MCF 10A (cell line): ENCODE measurements at regions of chr11 and their contacts with region 1.

Region 1: GRCh38 chr11:8786933-8787332 is 104.3 kb downstream of the RPL27A start:
- DNase-seq: peak; percentile 17
- H3K4me3 Mint-ChIP-seq: no peak overlapping the region
- H3K27ac Mint-ChIP-seq: peak overlapping the region; percentile 26
- H3K4me1 Mint-ChIP-seq: peaks cover 33% of the 10 kb centered on the region
- H3K27me3 Mint-ChIP-seq: no peaks in the 10 kb centered on the region
- CTCF ChIP-seq: no peak

Region 2: GRCh38 chr11:8711895-8712442 is 75.0 kb before region 1 on chr11:
- CTCF ChIA-PET with region 1: no interaction called
- POLR2A ChIA-PET with region 1: no interaction called
- intact Hi-C with region 1: no loop called
- DNase-seq: no peak
- H3K4me3 Mint-ChIP-seq: no peak overlapping the region
- H3K27ac Mint-ChIP-seq: no peak overlapping the region
- H3K4me1 Mint-ChIP-seq: peaks cover 12% of the 10 kb centered on the region
- H3K27me3 Mint-ChIP-seq: no peaks in the 10 kb centered on the region
- CTCF ChIP-seq: no peak

Region 3: GRCh38 chr11:8807544-8808225 is 20.8 kb after region 1 on chr11:
- CTCF ChIA-PET with region 1: interaction called, 12 read pairs
- POLR2A ChIA-PET with region 1: interaction called, 6 read pairs
- intact Hi-C with region 1: no loop called
- DNase-seq: peak; percentile 70
- H3K4me3 Mint-ChIP-seq: peak overlapping the region; percentile 80
- H3K27ac Mint-ChIP-seq: peak overlapping the region; percentile 83
- H3K4me1 Mint-ChIP-seq: peaks cover 37% of the 10 kb centered on the region
- H3K27me3 Mint-ChIP-seq: no peaks in the 10 kb centered on the region
- CTCF ChIP-seq: no peak

Region 4: DNA sequence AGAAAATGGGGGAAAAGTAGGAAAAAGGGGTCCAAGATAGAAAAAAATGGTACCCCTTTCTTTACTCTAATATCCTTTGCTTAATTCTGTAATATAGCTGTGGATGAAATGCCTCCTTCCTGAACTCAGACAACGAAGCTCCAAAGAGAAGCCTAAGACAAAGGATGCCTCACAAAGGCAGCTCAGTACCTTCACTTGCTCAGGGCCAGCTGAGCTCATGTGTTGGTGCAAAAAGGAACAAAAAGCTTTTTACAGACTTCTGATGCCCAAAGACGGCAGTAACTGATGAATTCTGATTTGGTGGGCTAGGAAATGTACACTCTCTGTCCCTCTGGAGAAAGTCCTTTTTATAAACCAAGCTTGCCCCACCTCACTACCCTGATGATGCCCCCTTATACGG is 400.7 kb after region 1 on chr11:
- CTCF ChIA-PET with region 1: no interaction called
- POLR2A ChIA-PET with region 1: no interaction called
- intact Hi-C with region 1: no loop called
- DNase-seq: no peak
- H3K4me3 Mint-ChIP-seq: no peak overlapping the region
- H3K27ac Mint-ChIP-seq: no peak overlapping the region
- H3K4me1 Mint-ChIP-seq: no peaks in the 10 kb centered on the region
- H3K27me3 Mint-ChIP-seq: no peaks in the 10 kb centered on the region
- CTCF ChIP-seq: no peak